Activated CD4-positive, alpha-beta T cell treated with anti-CD3 and anti-CD28 coated beads, Interleukin-2, amount 10 ng/mL, durations not matched to agents 7 days and 5 days (primary cell): ENCODE measurements at regions of chr17 and their contacts with region 1.

Region 1: GRCh38 chr17:7435221-7435675 is at the start of gene TMEM102:
- DNase-seq: peak; percentile 98
- H3K4me3 Mint-ChIP-seq: peak within 1 kb of the TSS; percentile 87
- H3K27ac Mint-ChIP-seq: peak within 1 kb of the TSS; percentile 97
- H3K4me1 Mint-ChIP-seq: peaks cover 38% of the 10 kb centered on the region
- H3K27me3 Mint-ChIP-seq: peaks cover 10% of the 10 kb centered on the region
- total RNA-seq, gene TMEM102: 16.7 to 18.1 TPM

Region 2: DNA sequence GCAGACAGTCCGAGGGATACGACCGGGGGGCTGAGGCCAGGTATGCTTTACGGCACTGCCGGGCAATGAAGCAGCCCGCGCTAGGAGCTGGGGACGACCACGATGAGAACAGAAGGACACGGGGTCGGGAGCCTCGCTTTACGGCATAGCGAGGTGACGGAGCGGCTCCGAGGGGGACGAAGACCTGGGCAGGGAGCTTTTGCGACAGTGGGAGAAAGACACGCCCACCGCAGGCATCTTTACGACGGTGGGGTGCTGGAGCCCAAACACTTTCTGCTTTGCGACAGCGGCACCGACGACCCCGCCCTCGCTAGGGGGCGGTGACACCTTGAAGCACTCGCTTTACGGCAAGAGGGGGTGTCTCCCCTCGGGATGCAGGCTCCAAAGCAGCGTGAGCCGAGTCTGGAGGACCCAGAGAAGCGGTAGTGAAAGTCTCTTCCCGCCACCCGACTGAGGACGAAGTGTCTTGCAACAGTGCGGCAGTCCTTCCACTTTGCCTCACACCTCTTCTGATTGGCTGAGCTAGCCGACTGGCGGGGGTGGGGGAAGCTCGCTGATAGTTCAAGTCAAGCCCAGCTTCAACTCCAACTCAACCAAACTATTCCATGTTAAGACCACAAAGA is 105.8 kb before region 1 on chr17:
- CTCF ChIA-PET with region 1: interaction called, 10 read pairs
- POLR2A ChIA-PET with region 1: no interaction called
- DNase-seq: peak; percentile 97
- H3K4me3 Mint-ChIP-seq: peak overlapping the region; percentile 87
- H3K27ac Mint-ChIP-seq: peak overlapping the region; percentile 98
- H3K4me1 Mint-ChIP-seq: peaks cover 57% of the 10 kb centered on the region
- H3K27me3 Mint-ChIP-seq: no peaks in the 10 kb centered on the region

Region 3: GRCh38 chr17:7403977-7404736 is 31.1 kb before region 1 on chr17 and contains the start of gene TMEM256:
- CTCF ChIA-PET with region 1: interaction called, 10 read pairs
- POLR2A ChIA-PET with region 1: no interaction called
- DNase-seq: peak; percentile 98
- H3K4me3 Mint-ChIP-seq: peak within 1 kb of the TSS; percentile 95
- H3K27ac Mint-ChIP-seq: peak within 1 kb of the TSS; percentile 95
- H3K4me1 Mint-ChIP-seq: peaks cover 28% of the 10 kb centered on the region
- H3K27me3 Mint-ChIP-seq: peaks cover 12% of the 10 kb centered on the region
- total RNA-seq, gene TMEM256: 47.2 to 48.3 TPM

Region 4: GRCh38 chr17:7454980-7455379 is 19.7 kb after region 1 on chr17:
- CTCF ChIA-PET with region 1: interaction called, 22 read pairs
- POLR2A ChIA-PET with region 1: interaction called, 3 read pairs
- DNase-seq: no peak
- H3K4me3 Mint-ChIP-seq: peak overlapping the region; percentile 83
- H3K27ac Mint-ChIP-seq: peak overlapping the region; percentile 93
- H3K4me1 Mint-ChIP-seq: peaks cover 37% of the 10 kb centered on the region
- H3K27me3 Mint-ChIP-seq: no peaks in the 10 kb centered on the region

Region 5: GRCh38 chr17:7496470-7497183 is 61.4 kb after region 1 on chr17:
- CTCF ChIA-PET with region 1: interaction called, 10 read pairs
- POLR2A ChIA-PET with region 1: no interaction called
- DNase-seq: no peak
- H3K4me3 Mint-ChIP-seq: no peak overlapping the region
- H3K27ac Mint-ChIP-seq: no peak overlapping the region
- H3K4me1 Mint-ChIP-seq: peaks cover 19% of the 10 kb centered on the region
- H3K27me3 Mint-ChIP-seq: no peaks in the 10 kb centered on the region